H1 (cell line): ENCODE measurements at regions of chr11 and their contacts with region 1.

Region 1: GRCh38 chr11:117861151-117862018 is 15.1 kb downstream of the FXYD6 start:
- DNase-seq: peak; percentile 72 to 75
- H3K4me3 ChIP-seq: 0 out of 8 replicates have a peak overlapping the region, but pooled peaks of 1 of the 4 experiments have one; percentile 1
- H3K27ac ChIP-seq: no peak overlapping the region
- H3K4me1 ChIP-seq: peaks cover 6 to 17% (median 13%) of the 10 kb centered on the region in 4 experiments
- H3K27me3 ChIP-seq: no peaks in the 10 kb centered on the region
- CTCF ChIP-seq: no peak
- EP300 ChIP-seq: no peak
- POLR2A ChIP-seq: no peak
- RAD21 ChIP-seq: no peak; a peak in 1 of 4 replicates

Region 2: DNA sequence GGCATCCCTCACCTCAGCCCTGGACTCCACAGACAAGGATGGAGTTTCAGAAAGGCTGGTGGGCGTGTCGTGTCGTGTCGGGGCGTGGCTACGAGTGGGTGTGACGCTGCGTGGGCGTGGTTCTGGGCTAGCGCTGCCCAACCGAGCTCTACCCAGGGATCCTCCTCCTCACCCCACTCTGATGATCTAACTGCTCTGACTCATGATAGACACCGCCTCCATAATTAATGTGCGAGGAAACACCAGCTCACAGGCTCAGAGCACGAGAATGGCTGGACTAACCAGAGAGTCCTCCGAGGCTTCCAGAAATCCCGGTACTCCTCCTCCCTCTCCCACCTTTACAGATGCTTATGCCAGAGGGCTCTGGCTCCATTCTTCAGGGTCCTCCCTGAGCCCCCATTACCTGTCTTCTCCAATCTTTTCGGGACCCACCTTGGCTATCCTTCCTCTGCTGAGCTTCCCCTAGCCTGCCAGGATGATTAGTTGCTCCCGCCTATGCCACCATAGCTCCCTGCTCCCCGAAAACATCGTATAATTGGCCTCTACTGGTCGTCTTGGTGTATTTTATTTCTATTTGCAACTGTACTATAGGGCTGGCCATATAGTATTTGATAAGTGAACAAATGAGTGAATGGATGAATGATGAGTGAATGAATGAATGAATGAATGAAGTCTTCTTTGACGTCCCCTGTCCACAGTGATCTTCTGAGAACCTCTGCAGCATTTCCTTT is 46.0 kb after region 1 on chr11:
- CTCF ChIA-PET with region 1: interaction called, 27 read pairs
- POLR2A ChIA-PET with region 1: no interaction called
- DNase-seq: peak; percentile 64 to 92
- H3K4me3 ChIP-seq: peak overlapping the region; percentile 2 to 34 (median 12); a peak in 4 of 8 replicates
- H3K27ac ChIP-seq: no peak overlapping the region
- H3K4me1 ChIP-seq: peaks cover 0 to 12% (median 3%) of the 10 kb centered on the region in 4 experiments; a peak in 5 of 7 replicates
- H3K27me3 ChIP-seq: no peaks in the 10 kb centered on the region
- CTCF ChIP-seq: no peak
- EP300 ChIP-seq: no peak
- POLR2A ChIP-seq: no peak
- RAD21 ChIP-seq: no peak

Region 3: DNA sequence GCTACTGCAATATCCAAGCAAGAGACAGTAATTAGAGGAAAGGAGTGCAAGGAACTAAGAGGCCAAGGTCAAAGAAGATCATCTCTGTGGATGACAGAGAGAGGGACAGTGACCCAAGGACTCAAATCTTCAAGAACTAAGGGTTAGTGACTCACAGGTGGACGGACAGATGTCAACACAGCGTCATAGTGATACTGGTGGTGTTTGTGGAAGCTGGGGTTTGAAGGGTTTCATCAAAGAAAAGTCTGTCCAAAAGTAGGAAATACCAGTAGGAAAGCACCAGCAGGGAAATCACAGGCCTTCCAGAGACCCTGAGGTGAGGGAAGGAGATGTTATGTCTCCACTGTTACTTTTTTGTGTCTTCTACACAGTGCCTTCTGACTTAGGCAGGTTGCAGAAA is 157.0 kb after region 1 on chr11:
- CTCF ChIA-PET with region 1: no interaction called
- POLR2A ChIA-PET with region 1: no interaction called
- DNase-seq: no peak
- H3K4me3 ChIP-seq: no peak overlapping the region
- H3K27ac ChIP-seq: no peak overlapping the region
- H3K4me1 ChIP-seq: no peaks in the 10 kb centered on the region
- H3K27me3 ChIP-seq: peaks cover 0 to 2% (median 0%) of the 10 kb centered on the region in 4 experiments; a peak in 1 of 7 replicates
- CTCF ChIP-seq: no peak
- EP300 ChIP-seq: no peak
- POLR2A ChIP-seq: no peak
- RAD21 ChIP-seq: no peak